ENCODE measurements at regions of chr11 and their contacts with region 1.

Region 1: DNA sequence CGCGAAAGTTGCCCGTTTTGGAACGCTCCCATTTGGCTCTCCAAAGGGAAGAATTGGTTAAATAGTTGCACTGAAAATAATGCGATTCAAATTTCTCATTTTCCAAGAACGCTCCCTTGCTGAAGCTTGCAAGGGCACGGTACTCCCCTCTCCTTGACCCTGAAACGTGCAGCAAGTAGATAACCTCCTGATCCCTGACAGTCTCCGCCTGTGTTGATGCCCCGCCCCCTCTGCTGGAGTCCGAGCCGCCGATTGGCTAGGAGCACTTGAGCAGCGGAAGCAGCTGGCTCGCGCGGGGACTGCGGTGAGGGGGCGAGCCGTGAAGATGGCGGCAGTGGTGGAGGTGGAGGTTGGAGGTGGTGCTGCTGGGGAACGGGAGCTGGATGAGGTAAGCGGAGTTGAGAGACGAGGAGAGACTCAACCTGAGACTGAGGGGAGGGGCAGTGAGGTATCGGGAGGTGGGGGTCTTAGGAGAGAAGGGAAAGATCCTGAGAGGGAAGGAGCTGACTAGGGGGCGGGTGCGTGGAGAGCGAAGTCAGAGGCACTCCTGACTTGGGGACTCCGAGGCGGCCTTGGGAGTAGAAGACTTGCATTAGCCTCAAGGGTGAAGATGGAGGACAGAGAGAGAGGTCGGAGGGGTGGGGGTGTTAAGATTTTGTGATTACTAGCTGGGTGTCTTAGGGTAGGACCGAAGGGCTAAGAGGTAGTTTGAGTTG is at the start of gene RNF121:
- DNase-seq: peak; percentile 96
- H3K4me3 Mint-ChIP-seq: peak within 1 kb of the TSS; percentile 98
- H3K27ac Mint-ChIP-seq: peak within 1 kb of the TSS; percentile 95
- H3K4me1 Mint-ChIP-seq: peaks cover 51% of the 10 kb centered on the region
- H3K27me3 Mint-ChIP-seq: no peaks in the 10 kb centered on the region
- total RNA-seq, gene RNF121: 65.8 and 70.3 TPM in 2 replicates

Region 2: GRCh38 chr11:71448257-71449171 is 480.4 kb before region 1 on chr11 and contains the start of gene DHCR7:
- intact Hi-C with region 1: loop called (anchors 5 kb)
- DNase-seq: peak; percentile 96
- H3K4me3 Mint-ChIP-seq: peak within 1 kb of the TSS; percentile 92
- H3K27ac Mint-ChIP-seq: peak within 1 kb of the TSS; percentile 93
- H3K4me1 Mint-ChIP-seq: peaks cover 62% of the 10 kb centered on the region
- H3K27me3 Mint-ChIP-seq: no peaks in the 10 kb centered on the region
- total RNA-seq, gene DHCR7: 100 and 106 TPM in 2 replicates

Region 3: DNA sequence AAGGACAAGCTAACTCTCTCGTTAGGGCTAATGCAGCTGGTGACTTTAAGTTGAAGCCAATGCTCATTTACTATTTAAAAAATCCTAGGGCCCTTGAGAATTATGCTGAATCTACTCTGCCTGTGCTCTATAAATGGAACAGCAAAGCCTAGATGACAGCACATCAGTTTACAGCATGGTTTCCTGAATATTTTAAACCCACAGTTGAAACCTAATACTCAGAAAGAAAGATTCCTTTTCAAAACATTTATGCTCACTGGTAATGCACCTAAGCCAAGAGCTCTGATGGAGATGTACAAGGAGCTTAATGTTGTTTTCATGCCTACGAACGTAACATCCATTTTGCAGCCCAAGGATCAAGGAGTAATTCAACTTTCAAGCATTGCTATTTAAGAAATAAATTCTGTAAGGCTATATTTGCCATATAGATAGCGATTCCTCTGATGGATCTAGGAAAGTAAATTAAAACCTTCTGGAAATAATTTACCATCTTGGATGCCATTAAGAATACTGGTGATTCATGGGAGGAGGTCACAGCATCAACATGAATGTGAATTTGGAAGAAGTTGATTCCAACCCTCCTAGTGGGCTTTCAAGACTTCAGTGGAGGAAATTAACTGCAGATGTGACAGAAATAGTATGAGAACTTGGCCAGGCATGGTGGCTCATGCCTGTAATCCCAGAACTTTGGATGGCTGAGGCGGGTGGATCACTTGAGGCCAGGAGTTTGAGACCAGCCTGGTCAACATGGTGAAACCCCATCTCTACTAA is 15.0 kb before region 1 on chr11:
- intact Hi-C with region 1: loop called (anchors 1 kb)
- DNase-seq: no peak
- H3K4me3 Mint-ChIP-seq: no peak overlapping the region
- H3K27ac Mint-ChIP-seq: peak overlapping the region; percentile 11
- H3K4me1 Mint-ChIP-seq: peaks cover 22% of the 10 kb centered on the region
- H3K27me3 Mint-ChIP-seq: no peaks in the 10 kb centered on the region

Region 4: GRCh38 chr11:72040726-72041441 is 112.0 kb after region 1 on chr11:
- intact Hi-C with region 1: loop called (anchors 5 kb)
- DNase-seq: peak; percentile 59
- H3K4me3 Mint-ChIP-seq: no peak overlapping the region
- H3K27ac Mint-ChIP-seq: no peak overlapping the region
- H3K4me1 Mint-ChIP-seq: peaks cover 23% of the 10 kb centered on the region
- H3K27me3 Mint-ChIP-seq: no peaks in the 10 kb centered on the region

Region 5: DNA sequence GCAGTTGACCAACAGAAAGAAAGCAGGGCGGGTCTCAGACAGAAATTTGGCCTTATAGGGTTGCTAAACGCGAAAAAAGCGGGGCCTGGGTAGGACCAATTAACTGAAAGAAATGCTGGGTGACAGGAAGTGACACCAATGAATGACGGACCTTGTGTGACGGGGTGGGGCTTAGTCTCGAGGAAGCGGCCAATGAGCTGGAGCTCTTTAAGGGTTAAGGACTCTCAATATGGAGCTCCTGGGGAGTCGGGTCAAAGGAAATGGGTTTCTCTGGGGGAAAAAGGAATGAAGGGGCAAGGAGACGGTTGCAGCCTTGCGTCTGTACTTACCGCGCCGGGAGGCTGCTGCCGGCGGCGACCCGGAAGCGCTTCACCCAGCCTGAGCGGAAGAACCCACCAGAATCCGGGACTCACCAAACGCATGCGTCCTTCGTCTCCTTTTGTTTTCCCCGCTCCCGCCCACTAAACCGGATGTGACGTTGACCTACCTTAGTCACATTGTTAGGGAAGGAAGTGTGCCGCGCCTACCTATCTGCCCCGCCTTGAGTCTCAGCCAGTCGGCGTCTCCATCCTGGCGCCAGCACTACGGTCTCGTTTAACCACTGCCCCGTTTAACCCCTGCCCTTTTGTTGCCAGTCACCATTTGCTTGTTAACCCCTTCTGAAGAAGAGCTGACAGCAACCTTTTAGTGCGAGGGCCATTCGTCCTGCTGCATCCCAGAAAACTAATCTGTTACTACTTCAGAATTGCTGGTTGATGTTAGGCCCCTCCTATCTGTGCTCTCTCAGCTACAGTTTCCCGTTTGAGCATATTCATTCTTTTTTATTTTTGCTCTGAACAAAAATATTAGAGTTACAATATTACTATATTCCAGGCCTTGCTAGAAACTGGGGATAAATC is 183.7 kb after region 1 on chr11 and contains the start of gene ANAPC15:
- intact Hi-C with region 1: loop called (anchors 1 kb)
- DNase-seq: peak; percentile 97
- H3K4me3 Mint-ChIP-seq: peak within 1 kb of the TSS; percentile 90
- H3K27ac Mint-ChIP-seq: peak within 1 kb of the TSS; percentile 98
- H3K4me1 Mint-ChIP-seq: peaks cover 28% of the 10 kb centered on the region
- H3K27me3 Mint-ChIP-seq: no peaks in the 10 kb centered on the region
- total RNA-seq, gene ANAPC15: 49.4 and 51.9 TPM in 2 replicates

Measured in activated T-helper 1 cell treated with anti-CD3 and anti-CD28 coated beads, Interleukin-12 subunit alpha, Interleukin-12 subunit beta, Interleukin-2, Interleukin-4 antibody, amounts not matched to agents 30 ng/mL and 10 ng/mL and 1 ng/mL, durations not matched to agents 14 hours and 24 hours and 36 hours (primary cell).